HepG2 (cell line): ENCODE measurements at regions of chr1 and their contacts with region 1.

Region 1: DNA sequence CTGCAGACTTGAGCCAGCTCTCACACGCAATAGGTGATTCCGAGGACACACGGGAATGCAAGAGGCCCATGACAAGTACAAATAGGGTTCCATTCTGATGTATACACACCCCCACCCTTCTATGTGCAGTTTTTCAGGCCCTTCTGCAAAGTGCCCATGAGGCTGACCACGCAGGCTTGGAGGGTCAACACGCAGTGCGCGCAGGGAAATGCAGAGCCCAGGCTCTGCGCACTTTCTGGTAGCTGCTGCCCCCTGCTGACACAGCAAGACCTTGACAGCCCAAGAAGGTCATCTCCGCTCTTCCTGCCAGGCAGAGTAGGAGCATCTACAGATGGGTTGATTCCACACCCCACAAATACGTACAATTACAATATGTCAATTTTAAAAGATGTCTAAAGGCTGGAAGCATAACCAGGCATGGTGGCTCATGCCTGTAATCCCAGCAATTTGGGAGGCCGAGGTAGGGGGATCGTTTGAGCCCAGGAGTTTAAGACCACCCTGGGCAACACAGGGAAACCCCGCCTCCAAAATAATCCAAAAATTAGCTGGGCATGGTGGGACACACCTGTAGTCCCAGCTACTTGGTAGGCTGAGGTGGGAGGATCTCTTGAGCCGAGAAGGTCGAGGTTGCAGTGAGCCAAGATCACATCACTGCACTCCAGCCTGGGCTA is 18.5 kb downstream of the SH3BP5L start:
- DNase-seq: peak; percentile 50
- ATAC-seq: peak; percentile 89
- H3K4me3 ChIP-seq: no peak overlapping the region
- H3K27ac ChIP-seq: no peak overlapping the region
- H3K4me1 ChIP-seq: peaks cover 28% of the 10 kb centered on the region
- H3K27me3 ChIP-seq: no peaks in the 10 kb centered on the region; a peak in 1 of 5 replicates
- CTCF ChIP-seq: peak; percentile 98
- EP300 ChIP-seq: no peak
- POLR2A ChIP-seq: no peak
- RAD21 ChIP-seq: peak; percentile 97

Region 2: GRCh38 chr1:248596615-248597014 is 210.6 kb before region 1 on chr1:
- CTCF ChIA-PET with region 1: no interaction called
- POLR2A ChIA-PET with region 1: no interaction called
- in situ Hi-C with region 1: no loop called
- intact Hi-C with region 1: no loop called
- DNase-seq: no peak
- ATAC-seq: no peak
- H3K4me3 ChIP-seq: no peak overlapping the region
- H3K27ac ChIP-seq: no peak overlapping the region
- H3K4me1 ChIP-seq: no peaks in the 10 kb centered on the region
- H3K27me3 ChIP-seq: no peaks in the 10 kb centered on the region
- CTCF ChIP-seq: no peak
- EP300 ChIP-seq: no peak
- POLR2A ChIP-seq: no peak
- RAD21 ChIP-seq: no peak

Region 3: DNA sequence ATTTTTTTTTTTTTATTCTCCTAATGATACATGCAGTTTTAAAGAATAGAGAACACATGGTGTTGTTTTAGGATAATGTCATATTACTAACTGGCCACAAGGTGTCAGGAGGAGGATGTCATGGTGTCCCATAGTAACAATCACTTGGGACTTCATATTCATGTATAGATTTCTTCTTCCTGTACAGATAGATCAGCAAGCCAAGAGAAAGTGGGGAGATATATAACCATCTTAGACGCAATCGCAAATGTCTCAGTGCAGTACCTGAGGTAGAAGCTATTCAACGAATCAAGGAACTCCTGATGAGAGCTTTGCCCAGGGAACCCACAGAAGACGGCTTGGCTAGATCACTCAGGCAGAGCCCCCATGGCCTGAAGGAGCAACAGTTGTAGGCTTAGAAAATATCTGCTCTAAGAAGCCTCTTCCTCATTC is 184.6 kb before region 1 on chr1:
- CTCF ChIA-PET with region 1: interaction called, 33 read pairs
- POLR2A ChIA-PET with region 1: no interaction called
- in situ Hi-C with region 1: no loop called
- intact Hi-C with region 1: loop called (anchors 1 kb)
- DNase-seq: peak; percentile 44
- ATAC-seq: peak; percentile 86
- H3K4me3 ChIP-seq: no peak overlapping the region
- H3K27ac ChIP-seq: no peak overlapping the region
- H3K4me1 ChIP-seq: no peaks in the 10 kb centered on the region
- H3K27me3 ChIP-seq: no peaks in the 10 kb centered on the region; a peak in 1 of 5 replicates
- CTCF ChIP-seq: peak; percentile 71
- EP300 ChIP-seq: no peak
- POLR2A ChIP-seq: no peak
- RAD21 ChIP-seq: no peak

Region 4: GRCh38 chr1:248696261-248696660 is 110.9 kb before region 1 on chr1:
- CTCF ChIA-PET with region 1: interaction called, 40 read pairs
- POLR2A ChIA-PET with region 1: no interaction called
- in situ Hi-C with region 1: no loop called
- intact Hi-C with region 1: loop called (anchors 1 kb)
- DNase-seq: peak; percentile 63
- ATAC-seq: peak; percentile 98
- H3K4me3 ChIP-seq: no peak overlapping the region
- H3K27ac ChIP-seq: no peak overlapping the region
- H3K4me1 ChIP-seq: no peaks in the 10 kb centered on the region
- H3K27me3 ChIP-seq: no peaks in the 10 kb centered on the region
- CTCF ChIP-seq: peak; percentile 79
- EP300 ChIP-seq: no peak
- POLR2A ChIP-seq: no peak
- RAD21 ChIP-seq: peak; percentile 65

Region 5: DNA sequence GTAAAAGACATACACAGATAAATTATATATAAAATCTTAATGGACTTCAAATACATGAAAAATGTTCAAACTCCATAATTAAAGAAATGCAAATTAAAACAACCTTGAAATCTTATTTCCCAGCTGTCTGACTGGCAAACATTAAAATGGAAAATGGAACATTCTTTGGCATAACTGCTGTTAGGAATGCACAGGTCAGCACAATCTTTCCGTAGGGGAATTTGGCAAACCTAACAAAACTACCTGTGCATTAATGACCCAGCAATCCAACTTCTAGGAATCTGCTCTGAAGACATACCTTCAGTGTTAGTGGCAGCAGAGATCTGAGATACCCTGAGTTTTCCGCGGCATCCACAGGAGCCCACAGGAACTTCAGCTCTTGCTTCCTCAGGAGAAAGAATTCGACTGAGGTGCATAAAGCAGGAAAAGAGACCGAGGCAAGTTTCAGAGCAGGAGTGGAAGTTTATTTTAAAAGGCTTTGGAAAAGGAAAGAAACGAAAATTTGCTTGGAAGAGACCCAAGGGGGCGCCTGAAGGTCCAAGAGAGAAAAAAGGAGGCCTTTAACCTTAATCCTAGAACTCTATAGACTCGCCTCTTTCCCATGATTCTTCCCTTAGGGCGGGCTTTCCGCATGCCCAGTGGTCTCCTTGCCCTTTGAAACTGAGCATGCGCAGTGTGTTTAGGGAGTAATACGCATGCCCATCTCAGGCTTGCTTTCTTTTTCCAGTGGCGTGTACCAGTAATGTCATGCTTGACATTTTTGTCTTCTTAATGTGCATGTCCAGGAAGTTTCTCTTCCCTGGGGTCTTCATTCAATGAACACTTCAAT is 76.5 kb before region 1 on chr1:
- CTCF ChIA-PET with region 1: no interaction called
- POLR2A ChIA-PET with region 1: no interaction called
- in situ Hi-C with region 1: no loop called
- intact Hi-C with region 1: loop called (anchors 1 kb)
- DNase-seq: no peak
- ATAC-seq: no peak
- H3K4me3 ChIP-seq: no peak overlapping the region
- H3K27ac ChIP-seq: no peak overlapping the region
- H3K4me1 ChIP-seq: 0 out of 2 replicates have a peak, but pooled peaks cover 7% of the 10 kb centered on the region
- H3K27me3 ChIP-seq: no peaks in the 10 kb centered on the region
- CTCF ChIP-seq: no peak
- EP300 ChIP-seq: no peak
- POLR2A ChIP-seq: no peak
- RAD21 ChIP-seq: no peak

Region 6: GRCh38 chr1:248752161-248753028 is 54.8 kb before region 1 on chr1:
- CTCF ChIA-PET with region 1: no interaction called
- POLR2A ChIA-PET with region 1: interaction called, 7 read pairs
- in situ Hi-C with region 1: no loop called
- intact Hi-C with region 1: loop called (anchors 5 kb)
- DNase-seq: peak; percentile 30
- ATAC-seq: peak; percentile 89
- H3K4me3 ChIP-seq: no peak overlapping the region
- H3K27ac ChIP-seq: no peak overlapping the region
- H3K4me1 ChIP-seq: peaks cover 34% of the 10 kb centered on the region
- H3K27me3 ChIP-seq: no peaks in the 10 kb centered on the region; a peak in 1 of 5 replicates
- CTCF ChIP-seq: no peak
- EP300 ChIP-seq: no peak
- POLR2A ChIP-seq: no peak
- RAD21 ChIP-seq: no peak